ENCODE measurements at regions of chr5 and their contacts with region 1.

Region 1: DNA sequence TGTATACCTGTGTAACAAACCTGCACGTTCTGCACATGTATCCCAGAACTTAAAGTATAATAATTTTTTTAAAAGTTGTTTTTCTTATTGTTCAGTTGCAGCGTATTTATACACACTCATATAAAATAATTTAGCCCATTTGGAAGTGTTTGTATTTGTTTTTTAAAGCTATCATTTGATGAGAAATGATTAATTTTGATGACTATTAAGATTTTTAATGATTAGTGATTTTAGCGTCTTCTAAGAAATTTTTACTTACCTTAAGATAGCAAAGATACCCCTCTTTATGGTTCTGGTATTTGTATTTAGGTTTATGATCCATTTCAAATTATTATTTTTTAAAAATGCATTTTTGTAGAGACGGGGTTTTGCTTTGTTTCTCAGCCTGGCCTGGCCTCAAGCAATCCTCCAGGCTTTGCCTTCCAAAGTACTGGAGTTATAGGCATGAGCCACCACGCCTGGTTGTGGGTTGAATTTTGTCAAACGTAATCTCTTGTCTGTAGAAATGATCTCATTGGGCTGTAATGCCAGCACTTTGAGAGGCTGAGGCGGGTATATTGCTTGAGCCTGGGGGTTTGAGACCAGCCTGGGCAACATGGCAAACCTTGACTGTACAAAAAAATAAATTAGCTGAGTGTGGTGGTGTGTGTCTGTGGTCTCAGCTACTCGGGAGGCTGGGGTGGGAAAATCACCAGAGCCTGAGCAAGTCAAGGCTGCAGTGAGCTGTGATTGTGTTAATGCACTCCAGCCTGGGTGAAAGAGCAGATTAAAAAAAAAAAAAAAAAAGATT is 26.9 kb downstream of the CSNK1G3 start:
- DNase-seq: no peak
- H3K4me3 ChIP-seq: no peak overlapping the region
- H3K4me3 Mint-ChIP-seq: peak overlapping the region in 1 of 7 donors; percentile 5
- H3K27ac ChIP-seq: no peak overlapping the region
- H3K27ac Mint-ChIP-seq: peak overlapping the region in 1 of 8 donors; percentile 34
- H3K4me1 ChIP-seq: peaks cover 7% of the 10 kb centered on the region
- H3K4me1 Mint-ChIP-seq: peaks cover 58 to 88% (median 87%) of the 10 kb centered on the region in 3 donors
- H3K27me3 ChIP-seq: no peaks in the 10 kb centered on the region
- H3K27me3 Mint-ChIP-seq: no peaks in the 10 kb centered on the region

Region 2: GRCh38 chr5:123582550-123583285 is 43.9 kb after region 1 on chr5:
- CTCF ChIA-PET with region 1: no interaction called
- POLR2A ChIA-PET with region 1: interaction called, 14 read pairs
- DNase-seq: no peak
- H3K4me3 ChIP-seq: no peak overlapping the region
- H3K4me3 Mint-ChIP-seq: no peak overlapping the region
- H3K27ac ChIP-seq: no peak overlapping the region
- H3K27ac Mint-ChIP-seq: no peak overlapping the region
- H3K4me1 ChIP-seq: no peaks in the 10 kb centered on the region
- H3K4me1 Mint-ChIP-seq: peaks cover 3 to 6% (median 4%) of the 10 kb centered on the region in 3 donors
- H3K27me3 ChIP-seq: no peaks in the 10 kb centered on the region
- H3K27me3 Mint-ChIP-seq: no peaks in the 10 kb centered on the region

Measured in CD8-positive, alpha-beta memory T cell (primary cell).